Psoas muscle (tissue), 8 donors: ENCODE measurements at regions of chrX and their contacts with region 1.

Region 1: DNA sequence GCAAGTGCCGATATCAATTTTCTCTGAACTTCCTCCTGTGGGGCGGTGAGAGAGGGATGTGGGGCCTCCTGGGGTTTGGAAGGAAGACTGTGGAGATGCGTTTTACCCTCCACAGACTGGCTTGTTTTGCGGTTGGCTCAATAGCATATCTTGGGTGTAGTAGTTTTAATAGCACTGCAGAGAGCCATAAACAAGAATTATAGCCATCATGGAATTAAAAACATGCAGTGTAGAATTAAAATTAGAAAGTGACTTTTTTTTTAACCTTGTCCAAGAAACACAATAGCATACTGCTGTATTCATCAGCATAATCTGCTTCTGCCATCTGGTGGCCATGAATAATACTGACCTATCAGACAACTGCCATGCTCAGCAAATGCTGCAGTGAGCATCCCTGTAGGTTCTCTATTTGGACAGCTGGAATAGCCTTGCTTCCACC is 47.3 kb upstream of the SCML1 start:
- DNase-seq: no peak
- ATAC-seq: peak; percentile 73 to 90 (median 78)
- H3K4me3 ChIP-seq: no peak overlapping the region
- H3K27ac ChIP-seq: no peak overlapping the region
- H3K4me1 ChIP-seq: no peaks in the 10 kb centered on the region
- H3K27me3 ChIP-seq: peaks cover 0 to 11% (median 0%) of the 10 kb centered on the region in 3 donors
- CTCF ChIP-seq: peak; percentile 74

Region 2: DNA sequence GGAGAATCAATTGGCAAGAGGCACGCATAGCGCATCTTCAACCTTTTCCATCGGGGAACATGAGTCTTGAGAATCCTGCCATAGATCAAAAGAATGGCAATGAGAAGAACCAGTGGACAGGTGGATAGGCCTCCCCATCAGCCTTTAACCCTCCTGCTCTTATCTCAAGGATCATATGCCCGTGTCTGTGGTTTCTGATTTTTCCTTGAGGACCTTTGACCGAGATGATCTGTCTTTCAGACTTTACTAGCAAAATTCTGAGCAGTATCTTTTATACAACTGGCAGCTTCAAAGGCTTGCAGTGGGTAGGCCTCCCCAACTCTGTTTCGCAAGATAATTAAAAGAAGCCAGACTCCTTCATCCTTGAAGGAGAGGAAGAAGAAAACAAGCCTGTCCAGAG is 569.2 kb before region 1 on chrX:
- intact Hi-C with region 1: loop called in 1 of 2 experiments (anchors 10 kb)
- DNase-seq: no peak
- ATAC-seq: no peak
- H3K4me3 ChIP-seq: no peak overlapping the region
- H3K27ac ChIP-seq: no peak overlapping the region
- H3K4me1 ChIP-seq: no peaks in the 10 kb centered on the region
- H3K27me3 ChIP-seq: peaks cover 0 to 7% (median 0%) of the 10 kb centered on the region in 3 donors
- CTCF ChIP-seq: no peak

Region 3: DNA sequence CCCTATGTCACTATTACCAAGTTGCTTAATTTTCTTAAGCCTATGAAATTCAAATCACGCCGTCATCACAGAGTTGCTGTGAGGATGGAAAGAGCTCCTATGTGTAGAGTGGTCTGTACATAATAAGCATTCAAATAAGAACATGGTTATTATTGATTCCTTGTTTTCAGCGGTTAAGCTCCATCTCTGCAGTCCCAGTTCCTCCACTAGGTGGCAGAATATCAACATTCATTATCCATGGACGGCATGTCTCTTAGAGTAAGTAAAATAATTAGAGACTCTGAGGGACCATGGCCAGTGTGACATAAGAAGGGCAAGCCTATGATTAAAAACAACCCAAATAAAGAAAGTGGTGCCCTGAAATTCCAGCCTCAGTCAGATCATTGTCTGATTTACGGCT is 447.5 kb before region 1 on chrX:
- intact Hi-C with region 1: loop called (anchors 2 to 5 kb)
- DNase-seq: no peak
- ATAC-seq: peak in 2 of 4 donors; percentile 40 to 46
- H3K4me3 ChIP-seq: no peak overlapping the region
- H3K27ac ChIP-seq: no peak overlapping the region
- H3K4me1 ChIP-seq: no peaks in the 10 kb centered on the region
- H3K27me3 ChIP-seq: peaks cover 0 to 12% (median 0%) of the 10 kb centered on the region in 3 donors
- CTCF ChIP-seq: peak; percentile 73

Region 4: GRCh38 chrX:17459008-17459611 is 230.9 kb before region 1 on chrX:
- intact Hi-C with region 1: no loop called
- DNase-seq: peak in 1 of 2 donors; percentile 25
- ATAC-seq: no peak
- H3K4me3 ChIP-seq: no peak overlapping the region
- H3K27ac ChIP-seq: no peak overlapping the region
- H3K4me1 ChIP-seq: no peaks in the 10 kb centered on the region
- H3K27me3 ChIP-seq: peaks cover 0 to 6% (median 0%) of the 10 kb centered on the region in 3 donors
- CTCF ChIP-seq: no peak

Region 5: DNA sequence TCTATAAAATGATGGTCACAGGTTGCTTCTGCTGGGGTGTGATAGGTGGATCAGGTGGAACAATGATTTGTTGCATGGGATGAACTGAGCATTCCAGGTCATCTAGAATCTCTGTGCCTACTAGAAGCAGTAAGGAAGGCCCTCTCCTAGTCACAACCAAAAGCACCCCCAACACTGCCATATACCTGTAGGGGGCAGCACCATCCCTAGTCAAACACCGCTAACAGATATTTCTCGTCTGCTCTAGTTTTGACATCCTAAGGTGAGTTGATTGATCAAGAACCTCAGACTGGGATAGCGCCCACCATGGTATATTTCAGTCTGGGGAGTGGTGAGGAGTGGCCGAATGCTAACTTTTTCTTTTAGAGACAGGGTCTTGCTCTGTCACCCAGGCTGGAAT is 154.8 kb before region 1 on chrX:
- intact Hi-C with region 1: loop called in 1 of 2 experiments (anchors 10 kb)
- DNase-seq: no peak
- ATAC-seq: peak in 1 of 4 donors; percentile 45
- H3K4me3 ChIP-seq: no peak overlapping the region
- H3K27ac ChIP-seq: no peak overlapping the region
- H3K4me1 ChIP-seq: no peaks in the 10 kb centered on the region
- H3K27me3 ChIP-seq: peaks cover 0 to 16% (median 0%) of the 10 kb centered on the region in 3 donors
- CTCF ChIP-seq: peak; percentile 28